Caco-2 (cell line): ENCODE measurements at regions of chr12 and their contacts with region 1.

Region 1: DNA sequence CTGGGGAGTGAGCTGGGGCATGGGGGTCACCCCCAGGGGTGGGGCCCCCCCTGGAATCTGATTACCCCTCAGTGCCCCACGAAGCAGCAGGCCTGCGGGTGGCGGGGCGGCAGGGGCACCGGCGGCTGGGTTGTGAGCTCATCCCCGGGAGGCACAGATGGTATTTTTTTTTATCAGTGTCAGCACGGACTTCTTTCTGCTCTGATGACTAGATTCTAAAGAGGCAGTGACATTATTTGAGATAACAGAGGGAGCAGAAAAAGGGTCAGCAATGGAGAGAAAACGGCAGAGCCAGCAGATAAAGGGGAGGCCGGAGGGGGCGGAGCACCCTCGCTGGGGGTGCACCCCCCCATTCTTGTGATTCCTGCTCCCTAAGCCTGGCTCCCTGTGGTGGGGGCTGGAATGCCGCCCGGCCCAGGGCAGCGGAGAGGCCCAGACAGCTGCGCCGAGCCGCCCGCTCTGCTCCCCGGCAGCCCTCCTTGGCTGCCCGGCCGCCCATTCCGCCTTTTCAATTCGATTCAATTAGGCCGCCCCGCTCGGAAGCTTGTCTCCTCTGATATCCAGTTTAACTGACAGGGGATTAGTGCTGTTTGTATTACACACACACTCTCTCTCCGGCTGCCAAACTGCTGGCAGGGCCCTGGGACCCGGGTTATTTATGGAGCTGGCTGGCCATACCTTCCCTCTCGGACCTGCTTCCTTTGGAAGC is 32.9 kb downstream of the MVK start:
- DNase-seq: peak; percentile 48 to 60
- H3K4me3 ChIP-seq: no peak overlapping the region
- H3K4me3 Mint-ChIP-seq: peak overlapping the region; percentile 29
- H3K27ac Mint-ChIP-seq: no peak overlapping the region
- H3K4me1 ChIP-seq: peaks cover 23% of the 10 kb centered on the region
- H3K4me1 Mint-ChIP-seq: peaks cover 17% of the 10 kb centered on the region
- H3K27me3 ChIP-seq: no peaks in the 10 kb centered on the region
- H3K27me3 Mint-ChIP-seq: no peaks in the 10 kb centered on the region
- CTCF ChIP-seq: no peak

Region 2: DNA sequence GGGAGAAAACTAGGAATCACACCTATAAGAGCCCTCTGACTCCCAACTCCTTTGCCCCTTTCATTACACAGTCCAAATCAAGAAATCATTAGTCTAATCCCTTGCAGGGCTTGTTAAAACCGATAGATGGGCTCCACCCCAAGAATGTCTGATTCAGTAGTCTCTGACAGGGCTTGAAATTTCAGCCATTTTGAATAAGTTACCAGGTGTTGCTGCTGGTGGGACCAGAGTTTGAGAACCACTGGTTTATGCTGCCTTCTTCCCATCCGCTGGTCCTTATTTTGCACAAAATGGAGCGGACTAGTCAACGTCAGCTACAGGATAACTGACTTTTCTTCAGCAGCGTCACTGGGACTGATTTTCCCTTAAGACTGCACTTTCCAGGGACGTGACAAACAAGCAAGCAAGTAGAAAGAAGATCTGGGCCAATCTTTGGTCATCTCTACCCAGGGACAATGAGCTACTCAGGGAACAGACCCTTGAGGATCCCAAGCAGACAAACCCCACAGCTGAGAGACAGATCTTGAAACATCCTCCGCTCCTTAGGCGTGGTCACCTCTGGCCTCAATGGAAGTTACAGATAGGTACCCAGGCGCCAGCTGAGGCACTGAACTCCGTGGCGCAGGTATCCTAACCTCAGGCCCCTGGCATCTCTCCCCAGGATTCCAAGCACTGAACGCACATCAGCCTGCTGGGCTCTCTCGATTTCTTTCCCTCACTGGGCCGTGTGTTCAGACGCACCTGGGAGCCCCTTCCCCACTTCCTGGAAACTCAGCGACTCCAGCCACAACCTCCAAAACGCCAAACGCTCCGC is 130.3 kb before region 1 on chr12:
- CTCF ChIA-PET with region 1: no interaction called
- POLR2A ChIA-PET with region 1: no interaction called
- intact Hi-C with region 1: no loop called
- DNase-seq: no peak
- H3K4me3 ChIP-seq: peak overlapping the region; percentile 95
- H3K4me3 Mint-ChIP-seq: peak overlapping the region; percentile 99
- H3K27ac Mint-ChIP-seq: peak overlapping the region; percentile 93
- H3K4me1 ChIP-seq: peaks cover 15% of the 10 kb centered on the region
- H3K4me1 Mint-ChIP-seq: no peaks in the 10 kb centered on the region
- H3K27me3 ChIP-seq: no peaks in the 10 kb centered on the region
- H3K27me3 Mint-ChIP-seq: no peaks in the 10 kb centered on the region
- CTCF ChIP-seq: no peak

Region 3: DNA sequence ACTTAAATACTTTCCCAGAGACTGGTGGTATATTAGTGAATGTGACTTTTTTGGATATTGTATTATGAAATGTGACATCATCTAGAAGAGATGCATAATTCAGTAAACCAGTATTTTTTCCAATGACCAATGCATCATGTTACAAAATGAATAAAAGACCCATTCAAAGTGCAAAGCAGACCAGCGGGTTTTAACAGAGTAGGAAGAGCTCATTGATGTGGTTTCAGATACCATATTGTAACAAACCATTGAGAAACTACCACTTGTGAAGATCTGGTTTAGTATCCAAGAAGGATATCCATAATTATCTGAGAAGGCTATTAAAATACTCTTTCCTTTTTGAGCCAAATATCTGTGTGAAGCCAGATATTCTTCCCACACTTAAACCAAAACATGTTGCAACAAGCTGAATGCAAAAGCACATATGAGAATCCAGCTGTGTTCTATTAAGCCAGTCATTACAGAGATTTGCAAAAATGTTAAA is 14.8 kb after region 1 on chr12:
- CTCF ChIA-PET with region 1: no interaction called
- POLR2A ChIA-PET with region 1: no interaction called
- intact Hi-C with region 1: no loop called
- DNase-seq: no peak
- H3K4me3 ChIP-seq: no peak overlapping the region
- H3K4me3 Mint-ChIP-seq: no peak overlapping the region
- H3K27ac Mint-ChIP-seq: no peak overlapping the region
- H3K4me1 ChIP-seq: no peaks in the 10 kb centered on the region
- H3K4me1 Mint-ChIP-seq: peaks cover 8% of the 10 kb centered on the region
- H3K27me3 ChIP-seq: no peaks in the 10 kb centered on the region
- H3K27me3 Mint-ChIP-seq: no peaks in the 10 kb centered on the region
- CTCF ChIP-seq: no peak

Region 4: DNA sequence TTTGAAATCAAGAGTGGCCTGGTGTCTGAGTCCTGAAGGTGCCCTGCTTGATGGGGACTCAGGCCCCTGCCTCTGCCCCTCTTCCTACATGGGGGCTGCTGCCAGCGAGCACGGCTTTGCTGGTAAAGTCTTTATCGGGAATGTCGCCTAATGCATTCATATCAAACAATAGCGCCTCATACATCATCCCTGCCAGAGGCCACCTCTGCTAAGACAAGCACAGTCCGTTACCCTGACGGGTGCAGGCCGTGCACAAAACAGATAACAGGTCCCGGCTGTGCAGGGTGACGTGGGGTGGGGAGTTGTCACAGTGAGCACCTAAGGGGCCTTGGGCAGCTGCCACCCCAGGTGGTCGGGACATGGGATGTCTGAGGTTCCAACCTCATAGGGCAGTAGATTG is 38.7 kb after region 1 on chr12:
- CTCF ChIA-PET with region 1: interaction called, 3 read pairs
- POLR2A ChIA-PET with region 1: no interaction called
- intact Hi-C with region 1: loop called (anchors 5 kb)
- DNase-seq: no peak
- H3K4me3 ChIP-seq: no peak overlapping the region
- H3K4me3 Mint-ChIP-seq: no peak overlapping the region
- H3K27ac Mint-ChIP-seq: no peak overlapping the region
- H3K4me1 ChIP-seq: peaks cover 43% of the 10 kb centered on the region
- H3K4me1 Mint-ChIP-seq: peaks cover 19% of the 10 kb centered on the region
- H3K27me3 ChIP-seq: no peaks in the 10 kb centered on the region
- H3K27me3 Mint-ChIP-seq: no peaks in the 10 kb centered on the region
- CTCF ChIP-seq: no peak

Region 5: DNA sequence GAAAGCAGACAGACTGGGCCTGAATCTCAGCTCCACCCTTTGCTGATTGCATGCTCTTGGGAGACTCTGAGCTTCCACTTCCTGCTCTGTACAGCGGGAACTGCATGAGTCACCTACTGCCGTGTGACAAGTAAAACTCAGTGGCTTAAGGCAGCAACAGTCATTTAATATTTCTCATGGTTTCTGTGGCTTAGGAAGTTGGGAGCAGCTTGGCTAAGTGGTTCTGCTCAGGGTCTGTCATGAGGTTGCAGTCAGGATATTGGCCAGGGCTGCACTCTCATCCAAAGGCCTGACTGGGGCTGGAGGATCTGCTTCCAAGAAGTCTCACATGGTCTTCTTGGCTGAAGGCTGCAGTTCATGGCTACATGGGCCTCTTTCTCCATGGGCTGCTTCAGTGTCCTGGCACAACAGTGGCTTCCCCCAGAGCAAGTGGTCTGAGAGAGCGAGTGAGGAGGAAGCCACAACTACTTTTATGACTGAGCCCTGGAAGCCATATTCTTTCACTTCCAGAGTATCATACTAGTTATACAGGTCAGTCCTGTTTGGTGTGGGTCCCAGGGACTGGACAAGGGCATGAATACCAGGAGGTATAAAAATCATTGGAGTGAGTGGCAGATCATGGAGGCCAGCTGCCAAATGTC is 156.8 kb after region 1 on chr12:
- CTCF ChIA-PET with region 1: no interaction called
- POLR2A ChIA-PET with region 1: no interaction called
- intact Hi-C with region 1: no loop called
- DNase-seq: peak in 1 of 2 experiments; percentile 34
- H3K4me3 ChIP-seq: no peak overlapping the region
- H3K4me3 Mint-ChIP-seq: no peak overlapping the region
- H3K27ac Mint-ChIP-seq: no peak overlapping the region
- H3K4me1 ChIP-seq: no peaks in the 10 kb centered on the region
- H3K4me1 Mint-ChIP-seq: no peaks in the 10 kb centered on the region
- H3K27me3 ChIP-seq: no peaks in the 10 kb centered on the region
- H3K27me3 Mint-ChIP-seq: no peaks in the 10 kb centered on the region
- CTCF ChIP-seq: no peak

Region 6: DNA sequence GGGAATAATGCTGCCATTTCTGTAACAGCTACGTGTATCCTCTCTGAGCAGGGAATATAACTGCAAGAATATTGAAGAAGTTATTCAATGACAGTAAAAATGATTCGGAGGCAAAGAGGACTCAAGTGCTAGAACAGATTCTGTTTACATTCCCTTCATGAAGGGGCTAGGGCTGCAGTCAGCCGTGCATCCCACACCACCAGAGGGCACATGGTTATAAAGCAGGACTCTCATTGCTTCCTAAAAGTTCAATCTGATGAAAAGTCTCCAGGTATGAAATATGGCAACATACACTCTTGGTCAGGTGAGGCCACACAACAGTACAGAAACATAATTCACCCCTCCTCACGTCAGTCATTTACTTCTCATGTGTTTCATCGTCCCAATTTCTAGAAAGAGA is 327.6 kb after region 1 on chr12:
- CTCF ChIA-PET with region 1: no interaction called
- POLR2A ChIA-PET with region 1: no interaction called
- intact Hi-C with region 1: no loop called
- DNase-seq: peak in 1 of 2 experiments; percentile 30
- H3K4me3 ChIP-seq: no peak overlapping the region
- H3K4me3 Mint-ChIP-seq: no peak overlapping the region
- H3K27ac Mint-ChIP-seq: no peak overlapping the region
- H3K4me1 ChIP-seq: peaks cover 13% of the 10 kb centered on the region
- H3K4me1 Mint-ChIP-seq: peaks cover 11% of the 10 kb centered on the region
- H3K27me3 ChIP-seq: no peaks in the 10 kb centered on the region
- H3K27me3 Mint-ChIP-seq: no peaks in the 10 kb centered on the region
- CTCF ChIP-seq: peak; percentile 28 to 62